ENCODE measurements at regions of chr19 and their contacts with region 1.

Region 1: DNA sequence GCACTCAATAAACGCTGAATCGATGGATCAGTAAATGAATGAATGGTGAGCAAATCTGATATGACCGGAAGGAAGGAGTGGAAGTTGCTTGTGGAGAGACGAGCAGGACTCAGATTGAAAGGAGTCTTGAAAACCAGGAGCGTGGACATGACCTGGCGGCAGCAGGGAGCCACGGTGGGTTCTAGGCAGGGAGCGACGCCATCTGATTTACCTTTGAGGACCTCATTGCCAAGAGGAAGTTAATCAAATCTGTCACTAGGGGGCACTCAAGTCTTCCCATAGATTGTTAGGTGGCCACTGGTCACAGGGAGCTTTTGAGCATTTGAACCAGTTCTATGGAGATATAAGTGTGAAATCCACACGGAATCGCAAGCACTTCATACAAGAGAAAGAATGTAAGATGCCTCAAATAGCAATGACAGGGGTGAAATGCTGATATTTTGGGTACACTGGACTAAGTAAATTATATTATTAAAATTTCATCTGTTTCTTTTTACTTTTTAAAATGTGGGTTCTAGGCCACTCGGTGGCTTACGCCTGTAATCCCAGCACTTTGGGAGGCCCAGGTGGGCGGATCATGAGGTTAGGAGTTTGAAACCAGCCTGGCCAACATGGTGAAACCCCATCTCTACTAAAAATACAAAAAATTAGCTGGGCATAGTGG is 9.2 kb upstream of the FBN3 start:
- DNase-seq: peak; percentile 85
- CTCF ChIP-seq: peak; percentile 66

Region 2: DNA sequence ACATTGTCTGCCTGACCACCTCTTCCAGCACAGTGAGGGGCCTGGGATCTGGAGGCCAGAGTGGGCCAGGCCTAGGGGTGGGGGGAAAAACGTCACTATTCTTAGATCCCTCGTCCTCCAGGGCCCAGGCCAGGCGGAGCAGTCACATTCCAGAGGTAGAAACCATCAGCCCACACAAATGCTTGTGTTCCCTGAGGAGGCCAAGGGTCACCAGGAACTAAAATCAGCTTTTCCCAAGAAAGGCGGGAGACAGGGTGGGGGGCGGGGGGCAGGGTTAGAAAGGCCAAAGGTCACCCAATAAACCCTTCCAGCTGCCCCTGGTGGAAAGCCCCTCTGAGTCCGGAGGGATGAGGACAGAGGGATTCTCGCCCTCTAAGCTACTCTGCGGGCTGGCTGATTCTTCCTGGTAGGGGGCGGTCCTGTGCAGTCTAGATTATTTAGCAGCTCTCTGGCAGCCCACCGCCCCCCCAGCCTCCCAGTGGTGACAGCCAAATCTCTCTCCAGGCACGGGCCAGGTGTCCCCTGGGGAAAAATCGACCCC is 129.5 kb before region 1 on chr19:
- in situ Hi-C with region 1: no loop called
- DNase-seq: no peak
- CTCF ChIP-seq: no peak

Region 3: GRCh38 chr19:8240274-8241229 is 82.0 kb after region 1 on chr19:
- in situ Hi-C with region 1: loop called (anchors 5 kb)
- DNase-seq: peak; percentile 91
- CTCF ChIP-seq: no peak